ENCODE measurements at regions of chr1 and their contacts with region 1.

Region 1: DNA sequence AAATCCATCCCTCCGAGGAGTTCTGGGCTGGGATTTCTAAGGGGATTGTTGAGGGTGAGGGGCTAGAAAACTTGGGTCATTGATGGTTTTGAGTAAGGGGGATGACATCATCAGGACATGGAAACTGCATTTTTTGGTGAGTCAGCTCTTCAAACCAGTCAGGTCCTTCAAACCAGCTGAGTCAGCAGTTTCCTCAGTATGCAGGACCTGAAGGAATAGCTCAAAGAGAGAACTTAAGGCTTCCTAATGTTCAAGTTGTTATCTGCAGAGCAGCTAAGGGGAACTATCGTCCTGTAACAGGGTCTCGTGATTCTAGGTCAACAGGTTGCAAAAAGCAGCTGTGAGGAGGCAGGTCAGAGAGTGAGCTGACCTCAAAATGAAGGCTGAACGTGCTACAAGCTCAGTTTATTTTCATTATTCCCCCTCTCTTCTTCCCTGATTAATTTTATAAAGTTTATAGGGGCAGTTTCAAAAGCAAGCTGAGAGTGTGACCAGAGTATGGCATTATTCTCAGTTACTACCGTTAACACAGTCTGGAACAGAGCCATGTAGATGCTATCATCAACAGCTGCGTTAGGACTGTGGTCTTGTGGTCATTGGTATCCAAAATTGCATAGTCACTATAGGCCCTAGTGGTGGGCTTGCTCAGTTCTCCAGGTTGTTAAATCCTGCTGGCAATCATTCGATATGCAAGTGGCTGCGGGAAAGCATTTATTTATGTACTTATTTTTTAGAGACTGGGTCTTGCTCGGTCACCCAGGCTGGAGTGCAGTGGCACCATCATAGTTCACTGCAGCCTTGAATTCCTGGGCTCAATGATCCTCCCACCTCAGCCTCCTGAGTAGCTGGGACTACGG is 10.7 kb upstream of the SDC3 start:
- DNase-seq: peak; percentile 72 to 95 (median 74)
- ATAC-seq: peak; percentile 90
- H3K4me3 ChIP-seq: no peak overlapping the region
- H3K27ac ChIP-seq: peak overlapping the region; percentile 92
- H3K4me1 ChIP-seq: peaks cover 36 to 37% of the 10 kb centered on the region in 2 experiments
- H3K27me3 ChIP-seq: no peaks in the 10 kb centered on the region
- CTCF ChIP-seq: peak; percentile 35 to 45 (median 37); a peak in 3 of 6 replicates
- EP300 ChIP-seq: peak; percentile 73
- POLR2A ChIP-seq: no peak
- RAD21 ChIP-seq: no peak; a peak in 2 of 4 replicates

Region 2: GRCh38 chr1:30929135-30929889 is 10.1 kb after region 1 on chr1:
- CTCF ChIA-PET with region 1: no interaction called
- POLR2A ChIA-PET with region 1: interaction called, 22 read pairs
- in situ Hi-C with region 1: no loop called
- intact Hi-C with region 1: no loop called
- DNase-seq: peak; percentile 74 to 79 (median 78)
- ATAC-seq: peak; percentile 92
- H3K4me3 ChIP-seq: no peak overlapping the region
- H3K27ac ChIP-seq: no peak overlapping the region
- H3K4me1 ChIP-seq: no peaks in the 10 kb centered on the region; a peak in 2 of 5 replicates
- H3K27me3 ChIP-seq: no peaks in the 10 kb centered on the region
- CTCF ChIP-seq: peak; percentile 78 to 95 (median 90)
- EP300 ChIP-seq: no peak
- POLR2A ChIP-seq: no peak; the same call in 1 of the 2 replicates
- RAD21 ChIP-seq: peak; percentile 83 to 96

Measured in K562 (cell line).